AG04449 (cell line): ENCODE measurements at regions of chr9 and their contacts with region 1.

Region 1: DNA sequence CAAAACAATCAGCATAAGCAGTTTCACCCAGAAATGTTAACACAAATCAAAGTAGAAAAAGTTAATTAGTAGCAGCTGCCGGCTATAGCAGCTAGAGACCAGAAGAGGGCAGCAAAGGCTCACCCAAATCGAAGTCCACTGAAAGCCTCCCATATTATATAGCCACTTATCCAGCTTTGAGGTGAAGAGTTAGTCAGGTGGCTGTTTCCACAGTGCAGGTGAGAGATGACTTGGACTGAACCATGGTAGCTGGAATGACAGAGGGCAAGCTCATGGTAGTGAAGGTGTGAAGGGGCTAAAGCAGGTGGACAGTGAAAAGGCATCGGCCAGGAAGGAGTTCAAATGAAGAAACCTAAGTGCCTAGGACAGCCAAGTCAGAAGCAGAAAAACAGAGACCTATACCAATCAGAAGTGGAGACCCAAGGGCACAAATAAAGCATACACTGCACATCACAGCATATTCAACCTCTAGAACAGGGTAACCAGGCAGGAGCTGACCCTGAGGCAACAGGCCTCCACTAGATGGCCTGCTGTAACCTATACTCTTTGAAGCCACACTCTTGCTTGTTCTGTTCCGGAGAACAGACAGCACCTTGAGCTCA is 7.2 kb upstream of the RNF38 start:
- DNase-seq: no peak
- H3K4me3 ChIP-seq: no peak overlapping the region
- CTCF ChIP-seq: peak; percentile 73

Region 2: DNA sequence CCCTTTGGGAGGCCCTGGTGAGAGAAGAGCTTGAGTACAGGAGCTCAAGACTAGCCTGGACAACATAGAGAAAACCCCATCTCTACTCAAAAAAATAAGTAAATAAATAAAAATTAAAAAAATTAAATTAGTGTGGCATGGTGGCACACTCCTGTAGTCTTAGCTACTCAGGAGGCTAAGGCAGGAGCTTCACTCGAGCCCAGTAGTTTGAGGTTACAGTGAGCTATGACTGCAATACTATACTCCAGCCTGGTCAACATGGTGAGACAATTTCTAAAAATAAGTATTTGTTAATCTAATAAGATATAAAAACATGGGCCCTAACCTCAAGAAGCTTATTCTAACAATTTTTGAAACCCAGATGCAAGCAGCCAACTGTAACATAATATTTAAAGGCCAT is 14.7 kb before region 1 on chr9:
- CTCF ChIA-PET with region 1: interaction called, 24 read pairs
- POLR2A ChIA-PET with region 1: interaction called, 3 read pairs
- DNase-seq: no peak
- H3K4me3 ChIP-seq: no peak overlapping the region
- CTCF ChIP-seq: no peak

Region 3: GRCh38 chr9:36436909-36437308 is 29.7 kb after region 1 on chr9:
- CTCF ChIA-PET with region 1: interaction called, 95 read pairs
- POLR2A ChIA-PET with region 1: no interaction called
- DNase-seq: no peak
- H3K4me3 ChIP-seq: no peak overlapping the region
- CTCF ChIP-seq: no peak

Region 4: DNA sequence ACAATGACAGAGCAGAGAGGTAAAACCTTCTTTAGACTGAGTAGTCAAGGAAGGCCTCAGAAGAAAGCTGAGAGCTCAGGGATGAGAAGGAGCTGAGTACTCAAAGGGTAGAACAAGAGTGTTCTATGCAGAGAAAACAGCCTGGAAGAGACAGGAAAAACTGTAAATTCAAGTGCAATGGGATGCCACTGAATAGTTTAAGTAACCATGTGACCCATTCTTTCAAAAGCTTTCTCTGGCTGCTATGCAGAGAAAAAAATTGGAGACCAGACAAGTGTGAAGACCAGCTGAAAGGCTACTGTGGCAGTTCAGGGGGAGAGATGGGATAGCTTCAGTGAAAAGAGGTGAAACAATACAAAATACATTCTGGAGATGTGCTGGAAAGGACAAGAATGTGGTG is 54.1 kb after region 1 on chr9:
- CTCF ChIA-PET with region 1: interaction called, 15 read pairs
- POLR2A ChIA-PET with region 1: no interaction called
- DNase-seq: peak; percentile 5
- H3K4me3 ChIP-seq: no peak overlapping the region
- CTCF ChIP-seq: no peak

Region 5: DNA sequence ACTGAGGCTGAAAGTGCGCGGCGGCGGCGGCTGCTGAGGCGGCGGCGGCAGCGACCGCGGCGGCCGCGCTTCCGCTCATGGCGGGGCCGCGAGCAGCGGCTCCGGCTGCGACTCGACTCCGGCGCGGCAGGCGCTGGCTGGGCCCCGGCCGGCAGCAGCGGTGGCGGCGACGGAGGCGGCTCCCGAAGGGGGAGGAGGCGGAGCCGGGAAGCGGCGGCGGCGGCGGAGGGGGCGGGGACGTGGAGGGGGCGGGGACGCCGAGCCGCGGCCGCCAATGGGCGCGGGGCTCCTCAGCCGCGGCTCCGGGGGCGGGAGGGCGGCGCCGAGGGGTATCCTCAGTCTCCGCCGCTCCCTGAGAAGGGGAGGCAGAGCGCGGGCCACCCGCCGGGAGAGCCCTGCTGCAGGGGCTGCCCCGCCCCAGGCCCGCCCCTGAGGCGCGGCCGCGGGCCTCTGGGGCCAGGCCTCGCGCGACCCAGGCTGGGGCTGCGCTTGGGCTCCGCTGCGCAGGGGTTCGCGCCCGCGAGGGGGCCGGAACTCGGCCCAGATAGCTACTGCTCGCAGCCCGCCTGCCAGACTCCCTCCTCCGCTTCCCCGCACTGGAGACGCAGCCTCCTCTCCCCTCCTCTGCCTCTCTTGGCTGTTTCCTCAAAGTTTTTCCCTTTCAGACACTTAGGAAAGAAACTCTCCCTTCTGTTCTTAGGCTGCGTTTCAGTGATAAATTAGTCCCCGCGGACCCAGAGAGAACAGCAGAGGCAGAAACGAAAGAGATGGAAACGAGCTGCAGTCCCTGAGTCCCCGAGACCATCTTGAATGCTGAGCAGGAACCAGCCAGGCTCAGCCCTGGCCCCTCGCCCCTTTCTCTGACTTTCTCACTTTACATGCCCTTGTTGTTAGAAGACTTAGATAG is 80.5 kb after region 1 on chr9:
- CTCF ChIA-PET with region 1: interaction called, 12 read pairs
- POLR2A ChIA-PET with region 1: no interaction called
- DNase-seq: peak; percentile 36
- H3K4me3 ChIP-seq: peak overlapping the region; percentile 83
- CTCF ChIP-seq: peak; percentile 29

Region 6: GRCh38 chr9:36597412-36598178 is 190.4 kb after region 1 on chr9:
- CTCF ChIA-PET with region 1: interaction called, 16 read pairs
- POLR2A ChIA-PET with region 1: no interaction called
- DNase-seq: no peak
- H3K4me3 ChIP-seq: no peak overlapping the region
- CTCF ChIP-seq: peak; percentile 66

Region 7: DNA sequence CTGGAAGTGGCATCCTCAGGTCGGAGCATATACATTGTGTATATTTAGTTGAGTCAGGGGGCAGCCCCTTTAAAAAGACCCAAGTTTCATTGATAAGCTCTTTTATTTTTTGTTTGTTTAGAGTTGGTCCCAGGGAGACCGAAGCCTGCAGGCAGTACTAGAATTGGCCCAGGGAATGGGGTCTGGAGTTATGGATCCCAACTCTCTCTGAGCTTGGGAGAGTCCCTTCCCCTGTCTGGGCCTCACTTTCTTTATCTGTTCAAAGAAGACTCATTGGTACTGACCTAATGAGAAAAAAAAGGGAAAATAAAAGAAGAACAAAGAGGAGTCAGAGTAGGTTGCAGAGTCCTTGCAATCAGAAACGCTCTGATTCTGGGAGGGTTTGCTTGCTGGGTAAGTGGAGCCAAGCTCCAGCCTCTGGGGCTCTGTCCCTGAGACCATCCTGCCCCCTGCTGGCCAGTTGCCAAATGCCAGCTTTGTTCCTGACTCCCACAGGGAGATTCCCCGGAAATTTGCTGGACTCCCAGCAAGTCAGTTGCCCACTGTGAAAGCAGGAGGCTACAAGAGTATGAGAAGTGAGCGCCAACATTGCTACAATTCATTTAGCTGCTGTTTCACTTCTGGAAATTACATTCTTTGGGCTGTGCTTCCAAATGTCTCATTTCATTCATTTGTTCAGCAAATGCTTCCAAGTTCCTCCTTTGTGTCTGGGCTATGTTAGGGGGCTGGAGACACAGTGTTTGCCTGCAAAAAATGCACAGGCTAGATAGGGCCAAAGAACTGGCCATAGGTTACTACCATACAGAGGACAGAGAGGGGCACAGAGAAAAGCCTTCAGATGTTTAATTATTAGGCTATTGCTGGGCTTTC is 321.7 kb after region 1 on chr9:
- CTCF ChIA-PET with region 1: interaction called, 25 read pairs
- POLR2A ChIA-PET with region 1: no interaction called
- DNase-seq: peak; percentile 23
- H3K4me3 ChIP-seq: no peak overlapping the region
- CTCF ChIP-seq: peak; percentile 79